ENCODE measurements at regions of chr15 and their contacts with region 1.

Region 1: GRCh38 chr15:27278761-27279160 is 307.8 kb downstream of the GABRG3 start:
- DNase-seq: no peak
- H3K4me3 ChIP-seq: no peak overlapping the region
- H3K27ac ChIP-seq: no peak overlapping the region
- H3K4me1 ChIP-seq: no peaks in the 10 kb centered on the region
- H3K27me3 ChIP-seq: no peaks in the 10 kb centered on the region
- CTCF ChIP-seq: no peak
- EP300 ChIP-seq: no peak
- POLR2A ChIP-seq: no peak

Region 2: GRCh38 chr15:27077790-27078189 is 201.0 kb before region 1 on chr15:
- intact Hi-C with region 1: no loop called
- DNase-seq: no peak
- H3K4me3 ChIP-seq: no peak overlapping the region
- H3K27ac ChIP-seq: no peak overlapping the region
- H3K4me1 ChIP-seq: no peaks in the 10 kb centered on the region
- H3K27me3 ChIP-seq: no peaks in the 10 kb centered on the region
- CTCF ChIP-seq: no peak
- EP300 ChIP-seq: no peak
- POLR2A ChIP-seq: no peak

Region 3: DNA sequence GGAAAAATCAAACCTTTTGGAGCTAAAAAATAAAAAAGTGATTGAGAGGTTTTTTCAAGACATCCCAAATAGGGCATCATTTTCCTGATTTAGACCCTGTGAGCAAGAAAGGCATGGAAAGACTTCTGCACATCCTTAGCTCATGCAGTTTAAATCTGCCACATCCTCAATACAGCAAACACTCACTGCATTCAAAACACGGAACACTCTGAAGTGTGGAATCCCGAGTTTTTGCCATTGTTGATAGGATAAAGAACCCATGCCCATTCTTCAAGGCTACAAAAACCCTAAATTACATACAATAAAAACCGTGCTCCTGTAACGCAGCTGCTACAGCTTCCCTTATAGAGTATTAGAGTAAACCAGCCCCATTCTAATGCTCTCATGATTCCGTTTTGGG is 39.0 kb after region 1 on chr15:
- intact Hi-C with region 1: loop called in 1 of 4 experiments (anchors 5 kb)
- DNase-seq: no peak
- H3K4me3 ChIP-seq: no peak overlapping the region
- H3K27ac ChIP-seq: no peak overlapping the region
- H3K4me1 ChIP-seq: no peaks in the 10 kb centered on the region
- H3K27me3 ChIP-seq: no peaks in the 10 kb centered on the region
- CTCF ChIP-seq: no peak
- EP300 ChIP-seq: no peak
- POLR2A ChIP-seq: no peak

Measured in ovary (tissue), 10 donors.